ENCODE measurements at regions of chr3 and their contacts with region 1.

Region 1: DNA sequence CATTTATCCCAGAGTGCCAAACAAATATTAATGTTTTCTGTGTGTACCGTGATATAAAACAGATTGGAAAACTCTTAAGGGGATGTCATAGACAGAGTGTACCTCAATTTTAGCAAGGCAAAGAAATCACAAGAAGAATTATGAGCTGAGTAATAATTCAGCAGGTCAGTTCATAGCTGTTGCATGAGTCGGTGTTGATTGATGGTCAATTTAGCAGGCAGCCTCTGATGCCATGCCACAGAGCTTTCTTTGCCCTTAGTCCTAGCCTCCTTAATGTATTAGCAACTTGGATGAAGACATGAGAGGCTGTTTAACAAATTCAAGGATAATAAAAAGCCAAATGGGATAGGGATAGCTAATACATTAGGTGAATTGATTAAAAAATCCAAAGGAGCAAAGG is 6.8 kb downstream of the SLC35A5 start:
- DNase-seq: no peak
- H3K4me3 Mint-ChIP-seq: no peak overlapping the region
- H3K27ac Mint-ChIP-seq: no peak overlapping the region
- H3K4me1 Mint-ChIP-seq: peaks cover 16% of the 10 kb centered on the region
- H3K27me3 Mint-ChIP-seq: no peaks in the 10 kb centered on the region

Region 2: GRCh38 chr3:112017091-112017490 is 551.6 kb before region 1 on chr3:
- CTCF ChIA-PET with region 1: no interaction called
- POLR2A ChIA-PET with region 1: no interaction called
- DNase-seq: no peak
- H3K4me3 Mint-ChIP-seq: no peak overlapping the region
- H3K27ac Mint-ChIP-seq: no peak overlapping the region
- H3K4me1 Mint-ChIP-seq: peaks cover 13% of the 10 kb centered on the region
- H3K27me3 Mint-ChIP-seq: no peaks in the 10 kb centered on the region

Region 3: GRCh38 chr3:112519424-112520001 is 49.1 kb before region 1 on chr3:
- CTCF ChIA-PET with region 1: no interaction called
- POLR2A ChIA-PET with region 1: no interaction called
- DNase-seq: peak; percentile 68
- H3K4me3 Mint-ChIP-seq: no peak overlapping the region
- H3K27ac Mint-ChIP-seq: no peak overlapping the region
- H3K4me1 Mint-ChIP-seq: peaks cover 27% of the 10 kb centered on the region
- H3K27me3 Mint-ChIP-seq: no peaks in the 10 kb centered on the region

Region 4: DNA sequence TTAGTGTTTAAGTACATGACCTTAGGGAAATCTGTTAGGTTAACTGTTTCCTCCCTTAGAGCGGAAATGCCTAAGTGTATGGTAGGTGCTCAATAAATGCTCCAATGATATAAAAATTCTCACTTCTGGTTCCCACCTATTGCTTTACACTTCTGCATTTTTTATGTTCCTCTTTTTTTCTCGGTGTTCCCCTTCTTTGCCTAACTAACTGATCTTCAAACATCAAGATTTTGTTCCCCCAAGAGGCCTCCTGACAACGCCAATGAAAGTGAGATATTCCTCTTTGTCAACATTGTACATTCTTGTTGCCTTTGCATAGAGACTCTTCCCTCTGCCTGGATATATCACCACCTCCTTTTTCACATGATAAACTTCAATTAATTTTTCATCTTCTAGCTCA is 10.6 kb after region 1 on chr3:
- CTCF ChIA-PET with region 1: interaction called, 11 read pairs
- POLR2A ChIA-PET with region 1: no interaction called
- DNase-seq: no peak
- H3K4me3 Mint-ChIP-seq: no peak overlapping the region
- H3K27ac Mint-ChIP-seq: no peak overlapping the region
- H3K4me1 Mint-ChIP-seq: peaks cover 5% of the 10 kb centered on the region
- H3K27me3 Mint-ChIP-seq: no peaks in the 10 kb centered on the region

Region 5: DNA sequence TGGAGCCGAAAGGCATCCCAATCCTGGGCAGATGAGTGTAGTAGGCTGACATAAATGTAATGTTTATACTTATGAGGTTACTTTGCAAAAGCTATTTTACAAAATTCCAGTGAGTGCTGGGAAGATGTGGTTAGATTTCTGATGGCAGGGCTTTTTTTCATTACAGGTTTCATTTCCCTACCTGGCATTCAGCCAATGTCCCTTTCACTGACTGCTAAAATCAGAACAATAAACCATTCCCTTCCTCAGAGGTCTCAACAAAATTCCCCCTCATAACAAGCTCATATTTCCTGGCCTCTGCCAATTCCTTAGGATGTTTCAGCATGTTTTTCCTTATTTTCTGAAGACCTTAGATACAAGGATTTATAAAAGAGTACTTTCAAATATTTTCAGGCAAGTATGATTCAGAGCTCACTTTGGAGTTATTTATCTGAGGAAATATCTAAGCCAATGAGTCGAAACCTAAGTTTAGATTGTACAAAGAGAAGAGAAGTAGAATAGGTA is 113.2 kb after region 1 on chr3:
- CTCF ChIA-PET with region 1: no interaction called
- POLR2A ChIA-PET with region 1: no interaction called
- DNase-seq: no peak
- H3K4me3 Mint-ChIP-seq: no peak overlapping the region
- H3K27ac Mint-ChIP-seq: no peak overlapping the region
- H3K4me1 Mint-ChIP-seq: peaks cover 23% of the 10 kb centered on the region
- H3K27me3 Mint-ChIP-seq: peaks cover 12% of the 10 kb centered on the region